A549 (cell line): ENCODE measurements at regions of chr17 and their contacts with region 1.

Region 1: DNA sequence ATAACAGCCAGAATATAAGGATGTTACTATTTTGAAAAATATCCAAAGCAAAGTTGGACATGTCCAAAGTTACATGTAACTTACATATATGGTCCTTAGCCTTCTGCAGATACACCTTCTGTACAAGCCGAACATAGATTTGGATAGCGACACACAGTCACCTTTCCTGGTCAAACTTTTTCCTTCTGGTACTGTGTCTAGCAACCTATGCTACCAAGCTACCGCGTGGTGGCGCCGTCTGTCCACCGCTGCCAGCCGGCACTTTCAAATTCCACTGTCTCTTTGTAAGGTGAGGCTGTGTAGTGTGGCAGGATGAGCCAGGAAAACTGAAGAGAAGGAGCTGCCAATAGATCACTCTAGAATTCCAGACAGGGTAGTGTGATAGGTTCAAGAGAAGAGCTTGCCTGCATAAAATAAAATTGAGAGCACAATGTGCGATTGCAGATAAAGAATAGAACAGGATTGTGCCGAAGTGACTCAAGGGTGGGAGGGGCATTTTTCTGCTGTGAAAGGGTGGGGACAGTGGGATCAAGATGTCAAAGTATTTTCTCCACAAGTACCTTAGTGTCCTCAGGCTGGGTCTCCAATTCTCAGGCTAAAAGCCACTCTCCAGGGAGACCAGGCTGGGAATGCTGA is 366.9 kb downstream of the SLC39A11 start:
- DNase-seq: peak; percentile 72 to 83
- ATAC-seq: peak; percentile 85 to 86
- H3K4me3 ChIP-seq: no peak overlapping the region
- H3K27ac ChIP-seq: peak overlapping the region; percentile 11 to 61; a peak in 3 of 6 replicates
- H3K4me1 ChIP-seq: peaks cover 20% of the 10 kb centered on the region
- CTCF ChIP-seq: peak; percentile 97
- EP300 ChIP-seq: no peak
- POLR2A ChIP-seq: no peak
- RAD21 ChIP-seq: peak; percentile 95 to 96

Region 2: GRCh38 chr17:72456026-72456569 is 269.5 kb before region 1 on chr17:
- CTCF ChIA-PET with region 1: no interaction called
- POLR2A ChIA-PET with region 1: no interaction called
- DNase-seq: peak; percentile 89 to 97
- ATAC-seq: peak; percentile 78 to 83
- H3K4me3 ChIP-seq: 0 out of 3 replicates have a peak overlapping the region, but pooled peaks have one; percentile 9
- H3K27ac ChIP-seq: peak overlapping the region; percentile 84 to 88
- H3K4me1 ChIP-seq: peaks cover 94% of the 10 kb centered on the region
- CTCF ChIP-seq: no peak
- EP300 ChIP-seq: peak; percentile 46 to 70; a peak in 2 of 5 replicates
- POLR2A ChIP-seq: no peak
- RAD21 ChIP-seq: no peak; a peak in 3 of 5 replicates

Region 3: DNA sequence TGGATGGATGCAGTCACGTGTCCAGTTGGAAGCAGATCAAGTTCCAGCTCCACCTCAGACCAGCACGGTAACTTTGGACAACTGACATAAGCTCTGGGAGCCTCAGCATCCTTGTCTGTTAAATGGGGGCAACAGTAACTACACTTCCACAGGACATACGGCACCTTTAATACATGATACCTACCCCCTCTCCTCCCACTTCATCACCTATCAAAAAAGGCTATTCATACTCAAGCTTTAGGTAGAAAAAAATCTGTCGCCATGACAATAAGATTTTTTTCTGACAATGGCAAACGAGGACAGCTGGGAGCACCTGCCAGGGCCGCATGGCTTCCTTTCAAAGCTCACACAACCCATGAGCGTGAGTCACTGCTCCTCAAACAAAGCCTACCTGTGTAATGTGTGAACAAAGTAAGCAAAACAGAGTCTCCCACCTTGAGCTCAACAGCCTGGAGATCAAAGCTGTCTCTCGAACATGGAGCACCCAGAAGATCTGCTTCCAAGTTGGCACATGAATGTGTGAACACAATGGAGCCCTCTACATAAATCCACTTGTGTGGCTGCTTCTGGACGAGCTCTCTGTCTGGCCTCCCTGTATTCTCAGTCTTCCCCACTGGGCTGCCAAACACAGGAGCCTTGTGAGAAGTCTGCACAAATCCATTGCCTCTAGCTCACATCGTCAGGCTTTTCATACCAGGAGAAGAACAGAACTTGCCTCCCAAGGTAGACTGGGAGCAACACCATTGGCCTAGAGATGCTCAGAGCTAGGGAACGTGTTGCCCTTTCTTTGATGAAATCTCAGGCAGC is 145.0 kb before region 1 on chr17:
- CTCF ChIA-PET with region 1: interaction called, 71 read pairs
- POLR2A ChIA-PET with region 1: no interaction called
- DNase-seq: peak in 1 of 2 experiments; percentile 50
- ATAC-seq: peak; percentile 42 to 47
- H3K4me3 ChIP-seq: no peak overlapping the region
- H3K27ac ChIP-seq: peak overlapping the region in 1 of 2 experiments; percentile 45; a peak in 3 of 6 replicates
- H3K4me1 ChIP-seq: peaks cover 58% of the 10 kb centered on the region
- CTCF ChIP-seq: no peak
- EP300 ChIP-seq: no peak
- POLR2A ChIP-seq: no peak
- RAD21 ChIP-seq: no peak

Region 4: DNA sequence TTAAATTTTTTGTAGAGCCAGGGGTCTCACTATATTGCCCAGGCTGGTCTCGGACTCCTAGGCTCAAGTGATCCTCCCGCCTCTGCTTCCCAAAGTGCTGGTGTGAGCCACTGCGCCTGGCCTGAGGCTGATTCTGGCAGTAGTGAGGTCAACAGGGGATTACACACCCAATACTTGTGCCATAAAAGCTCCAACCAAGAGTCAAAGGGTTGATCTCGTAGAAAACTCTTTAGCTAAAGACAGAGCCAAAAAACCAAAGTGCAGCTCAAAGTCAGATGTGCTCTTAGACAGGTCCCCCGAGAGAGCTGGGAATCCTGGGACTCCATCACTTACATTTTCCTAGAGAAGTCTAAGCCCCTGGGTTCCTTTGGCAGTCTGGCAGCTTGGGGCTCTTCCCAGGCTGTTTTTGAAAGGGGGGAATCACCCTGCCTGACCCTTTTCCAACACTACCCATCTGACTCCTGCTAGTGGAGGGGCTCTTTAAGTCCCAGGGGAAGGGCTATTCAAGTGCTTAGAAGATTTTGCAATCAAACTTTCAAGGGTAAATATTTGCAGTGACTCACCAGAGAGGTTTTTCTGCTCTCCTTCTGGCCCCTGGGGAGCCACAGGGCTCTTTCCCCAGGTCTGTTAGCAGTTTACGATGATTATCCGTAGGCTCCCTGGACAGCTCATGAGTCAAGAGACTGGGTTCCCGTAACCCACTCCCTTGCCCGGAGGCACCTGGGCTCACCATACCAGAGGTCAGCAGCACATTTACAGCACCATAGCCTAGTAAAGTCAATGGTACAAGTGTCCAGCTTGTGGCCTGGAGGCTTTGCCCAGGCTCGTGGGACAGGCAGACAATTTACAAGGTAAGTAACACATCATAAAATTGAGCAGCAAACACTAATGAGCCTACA is 41.8 kb before region 1 on chr17:
- CTCF ChIA-PET with region 1: interaction called, 76 read pairs
- POLR2A ChIA-PET with region 1: no interaction called
- DNase-seq: peak; percentile 98 to 100
- ATAC-seq: peak; percentile 91 to 94
- H3K4me3 ChIP-seq: peak overlapping the region; percentile 6; the same call in 1 of the 3 replicates
- H3K27ac ChIP-seq: peak overlapping the region; percentile 89 to 94
- H3K4me1 ChIP-seq: peaks cover 48% of the 10 kb centered on the region
- CTCF ChIP-seq: no peak
- EP300 ChIP-seq: peak; percentile 96 to 97
- POLR2A ChIP-seq: no peak
- RAD21 ChIP-seq: peak; percentile 57 to 80

Region 5: GRCh38 chr17:72764632-72765041 is 39.1 kb after region 1 on chr17:
- CTCF ChIA-PET with region 1: interaction called, 31 read pairs
- POLR2A ChIA-PET with region 1: no interaction called
- DNase-seq: no peak
- ATAC-seq: no peak
- H3K4me3 ChIP-seq: no peak overlapping the region
- H3K27ac ChIP-seq: no peak overlapping the region
- H3K4me1 ChIP-seq: no peaks in the 10 kb centered on the region
- CTCF ChIP-seq: no peak
- EP300 ChIP-seq: no peak
- POLR2A ChIP-seq: no peak
- RAD21 ChIP-seq: no peak

Region 6: DNA sequence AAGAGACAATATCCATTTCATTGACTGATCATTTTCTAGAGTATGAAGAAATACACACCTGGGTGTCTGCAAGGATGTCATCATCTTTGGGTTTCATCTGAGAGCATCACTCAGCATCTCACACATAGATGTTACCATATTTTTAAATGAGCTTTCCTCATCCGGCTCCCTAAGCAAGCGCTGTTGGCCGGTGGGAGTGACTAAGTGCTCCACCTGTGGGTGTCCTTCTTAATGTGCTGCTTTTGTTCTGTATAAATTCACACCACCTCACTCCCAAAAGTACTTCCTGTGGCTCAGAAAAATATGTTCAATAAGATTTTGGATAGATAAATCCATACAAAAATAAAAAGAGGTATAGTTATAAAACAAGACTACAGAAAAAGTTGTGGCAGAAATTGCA is 446.7 kb after region 1 on chr17:
- CTCF ChIA-PET with region 1: interaction called, 483 read pairs
- POLR2A ChIA-PET with region 1: no interaction called
- DNase-seq: no peak
- ATAC-seq: no peak
- H3K4me3 ChIP-seq: no peak overlapping the region
- H3K27ac ChIP-seq: no peak overlapping the region
- H3K4me1 ChIP-seq: no peaks in the 10 kb centered on the region
- CTCF ChIP-seq: no peak
- EP300 ChIP-seq: no peak
- POLR2A ChIP-seq: no peak
- RAD21 ChIP-seq: no peak

Region 7: GRCh38 chr17:73240561-73240960 is 515.0 kb after region 1 on chr17:
- CTCF ChIA-PET with region 1: interaction called, 150 read pairs
- POLR2A ChIA-PET with region 1: no interaction called
- DNase-seq: no peak
- ATAC-seq: no peak
- H3K4me3 ChIP-seq: no peak overlapping the region
- H3K27ac ChIP-seq: no peak overlapping the region
- H3K4me1 ChIP-seq: no peaks in the 10 kb centered on the region
- CTCF ChIP-seq: no peak
- EP300 ChIP-seq: no peak
- POLR2A ChIP-seq: no peak
- RAD21 ChIP-seq: no peak